GM12878 (cell line): ENCODE measurements at regions of chr11 and their contacts with region 1.

Region 1: GRCh38 chr11:95705485-95706124 is 84.0 kb downstream of the FAM76B start:
- DNase-seq: no peak
- ATAC-seq: peak; percentile 98
- H3K4me3 ChIP-seq: no peak overlapping the region
- H3K27ac ChIP-seq: no peak overlapping the region
- H3K4me1 ChIP-seq: peaks cover 6% of the 10 kb centered on the region
- H3K27me3 ChIP-seq: no peaks in the 10 kb centered on the region
- CTCF ChIP-seq: peak; percentile 92 to 97 (median 93)
- EP300 ChIP-seq: no peak
- POLR2A ChIP-seq: no peak
- RAD21 ChIP-seq: peak; percentile 99

Region 2: DNA sequence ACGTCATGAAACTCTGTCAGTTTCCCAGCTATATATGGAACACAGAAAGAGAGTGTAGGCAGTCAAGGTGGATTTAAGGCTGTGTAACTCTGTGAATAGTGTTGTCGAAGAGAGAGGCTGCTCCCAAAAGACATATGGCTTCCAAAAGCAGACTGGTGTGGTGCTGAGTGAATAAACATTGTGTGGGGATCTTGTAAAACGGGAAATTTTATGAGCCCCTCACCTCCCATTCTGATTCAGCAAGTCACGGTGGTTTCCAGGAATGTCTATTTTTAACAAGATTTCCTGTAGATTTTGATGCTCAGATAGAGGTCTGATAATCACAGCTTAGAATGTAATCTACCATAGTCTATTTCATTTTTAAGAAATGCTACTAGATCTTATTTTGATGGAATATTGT is 542.5 kb before region 1 on chr11:
- CTCF ChIA-PET with region 1: interaction called, 590 read pairs
- POLR2A ChIA-PET with region 1: no interaction called
- RAD21 ChIA-PET with region 1: interaction called, 425 read pairs
- SMC1A ChIA-PET with region 1: interaction called, 474 read pairs
- in situ Hi-C with region 1: no loop called
- intact Hi-C with region 1: no loop called
- DNase-seq: no peak
- ATAC-seq: no peak
- H3K4me3 ChIP-seq: no peak overlapping the region
- H3K27ac ChIP-seq: no peak overlapping the region
- H3K4me1 ChIP-seq: no peaks in the 10 kb centered on the region
- H3K27me3 ChIP-seq: no peaks in the 10 kb centered on the region; a peak in 1 of 4 replicates
- CTCF ChIP-seq: no peak
- EP300 ChIP-seq: no peak
- POLR2A ChIP-seq: no peak
- RAD21 ChIP-seq: no peak

Region 3: DNA sequence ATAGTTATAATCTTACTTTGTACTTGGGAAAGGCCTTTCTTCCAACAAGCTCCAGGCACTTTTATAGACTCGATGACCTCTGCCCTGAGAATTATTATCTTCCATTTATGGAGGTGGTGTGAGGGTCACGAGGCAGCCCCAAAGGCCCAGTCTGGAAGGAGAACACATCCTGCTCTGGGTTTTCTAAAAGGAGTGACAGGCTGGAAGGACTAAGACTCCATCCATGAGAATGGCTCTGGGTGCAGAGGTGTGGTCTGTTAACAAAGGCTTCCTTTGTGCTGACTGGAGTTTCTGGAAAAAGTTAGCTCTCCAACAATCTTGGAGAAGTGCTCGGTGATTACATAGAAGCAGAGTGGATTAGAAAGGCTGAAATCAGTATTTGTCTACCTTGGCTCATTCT is 399.9 kb before region 1 on chr11:
- CTCF ChIA-PET with region 1: interaction called, 12 read pairs
- POLR2A ChIA-PET with region 1: no interaction called
- RAD21 ChIA-PET with region 1: no interaction called
- SMC1A ChIA-PET with region 1: no interaction called
- in situ Hi-C with region 1: no loop called
- intact Hi-C with region 1: no loop called
- DNase-seq: no peak
- ATAC-seq: no peak
- H3K4me3 ChIP-seq: no peak overlapping the region
- H3K27ac ChIP-seq: no peak overlapping the region
- H3K4me1 ChIP-seq: no peaks in the 10 kb centered on the region
- H3K27me3 ChIP-seq: no peaks in the 10 kb centered on the region; a peak in 1 of 4 replicates
- CTCF ChIP-seq: no peak
- EP300 ChIP-seq: no peak
- POLR2A ChIP-seq: no peak
- RAD21 ChIP-seq: no peak

Region 4: DNA sequence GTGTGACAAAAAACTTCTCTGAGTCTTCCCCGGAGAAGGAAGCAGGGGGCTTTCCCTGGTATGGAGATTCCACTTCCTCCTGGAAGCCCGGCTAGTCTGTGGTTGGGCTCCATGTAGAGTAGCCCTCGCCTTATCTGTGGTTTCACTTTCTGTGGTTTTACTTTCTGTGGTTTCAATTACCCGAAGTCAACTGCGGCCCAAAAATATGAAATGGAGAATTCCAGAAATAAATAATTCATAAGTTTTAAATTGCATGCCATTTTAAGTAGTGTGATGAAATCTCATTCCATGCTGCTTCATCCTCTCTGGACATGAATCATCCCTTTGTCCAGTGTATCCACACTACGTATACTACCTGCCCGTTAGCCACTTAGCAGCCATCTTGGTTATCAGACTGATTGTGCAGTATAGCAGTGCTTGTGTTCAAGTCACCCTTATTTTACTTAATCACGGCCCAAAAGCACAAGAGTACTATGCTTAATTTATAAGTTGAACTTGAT is 199.6 kb before region 1 on chr11:
- CTCF ChIA-PET with region 1: interaction called, 20 read pairs
- POLR2A ChIA-PET with region 1: no interaction called
- RAD21 ChIA-PET with region 1: interaction called, 21 read pairs
- SMC1A ChIA-PET with region 1: interaction called, 8 read pairs
- in situ Hi-C with region 1: no loop called
- intact Hi-C with region 1: loop called (anchors 5 kb)
- DNase-seq: no peak
- ATAC-seq: no peak
- H3K4me3 ChIP-seq: no peak overlapping the region
- H3K27ac ChIP-seq: no peak overlapping the region
- H3K4me1 ChIP-seq: no peaks in the 10 kb centered on the region
- H3K27me3 ChIP-seq: no peaks in the 10 kb centered on the region; a peak in 2 of 4 replicates
- CTCF ChIP-seq: no peak
- EP300 ChIP-seq: no peak
- POLR2A ChIP-seq: no peak
- RAD21 ChIP-seq: no peak

Region 5: DNA sequence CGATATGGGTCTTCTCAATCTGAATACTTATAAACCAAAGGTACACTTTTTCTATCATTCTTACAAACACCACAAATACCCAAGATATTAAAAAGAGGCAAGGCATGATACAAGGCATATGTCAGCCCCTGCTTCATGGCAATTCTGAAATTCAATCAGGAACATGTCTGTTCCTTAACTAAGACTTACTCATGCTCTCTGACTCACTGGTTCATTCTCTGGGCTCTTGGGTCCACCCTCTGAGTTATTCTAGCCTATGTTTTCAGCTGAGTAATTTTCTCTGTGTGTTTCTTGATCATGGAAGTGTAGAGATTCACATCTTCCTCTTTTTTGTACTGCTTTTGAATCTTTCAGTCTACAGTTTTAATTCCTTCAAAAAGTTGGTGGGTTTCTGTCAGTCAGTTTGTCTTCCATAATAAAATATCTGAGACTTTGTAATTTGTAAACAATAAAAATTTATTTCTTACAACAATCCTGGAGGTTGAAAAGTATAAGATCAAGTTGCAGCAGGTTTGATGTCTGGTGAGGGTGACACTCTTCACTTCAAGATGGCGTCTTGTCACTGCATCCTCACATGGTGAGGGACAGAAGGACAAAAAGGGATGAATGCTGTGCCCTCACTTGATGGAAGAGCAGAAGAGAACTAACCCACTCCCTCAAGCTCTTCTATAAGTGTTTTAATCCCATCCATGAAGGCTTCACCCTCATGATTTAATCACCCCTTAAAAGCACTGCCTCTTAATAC is 127.7 kb before region 1 on chr11:
- CTCF ChIA-PET with region 1: interaction called, 21 read pairs
- POLR2A ChIA-PET with region 1: interaction called, 3 read pairs
- RAD21 ChIA-PET with region 1: interaction called, 25 read pairs
- SMC1A ChIA-PET with region 1: interaction called, 48 read pairs
- in situ Hi-C with region 1: no loop called
- intact Hi-C with region 1: loop called (anchors 1 kb)
- DNase-seq: no peak
- ATAC-seq: peak; percentile 85
- H3K4me3 ChIP-seq: no peak overlapping the region
- H3K27ac ChIP-seq: no peak overlapping the region
- H3K4me1 ChIP-seq: no peaks in the 10 kb centered on the region
- H3K27me3 ChIP-seq: no peaks in the 10 kb centered on the region
- CTCF ChIP-seq: peak; percentile 10 to 23 (median 11); a peak in 2 of 6 replicates
- EP300 ChIP-seq: no peak
- POLR2A ChIP-seq: no peak
- RAD21 ChIP-seq: peak; percentile 45; the same call in 1 of the 2 replicates

Region 6: GRCh38 chr11:95680169-95680929 is 25.3 kb before region 1 on chr11:
- CTCF ChIA-PET with region 1: interaction called, 19 read pairs
- POLR2A ChIA-PET with region 1: no interaction called
- RAD21 ChIA-PET with region 1: interaction called, 10 read pairs
- SMC1A ChIA-PET with region 1: interaction called, 19 read pairs
- in situ Hi-C with region 1: no loop called
- intact Hi-C with region 1: no loop called
- DNase-seq: no peak
- ATAC-seq: peak; percentile 79
- H3K4me3 ChIP-seq: no peak overlapping the region
- H3K27ac ChIP-seq: no peak overlapping the region; the same call in 1 of the 2 replicates
- H3K4me1 ChIP-seq: peaks cover 7% of the 10 kb centered on the region
- H3K27me3 ChIP-seq: no peaks in the 10 kb centered on the region
- CTCF ChIP-seq: no peak
- EP300 ChIP-seq: no peak
- POLR2A ChIP-seq: no peak
- RAD21 ChIP-seq: no peak

Region 7: DNA sequence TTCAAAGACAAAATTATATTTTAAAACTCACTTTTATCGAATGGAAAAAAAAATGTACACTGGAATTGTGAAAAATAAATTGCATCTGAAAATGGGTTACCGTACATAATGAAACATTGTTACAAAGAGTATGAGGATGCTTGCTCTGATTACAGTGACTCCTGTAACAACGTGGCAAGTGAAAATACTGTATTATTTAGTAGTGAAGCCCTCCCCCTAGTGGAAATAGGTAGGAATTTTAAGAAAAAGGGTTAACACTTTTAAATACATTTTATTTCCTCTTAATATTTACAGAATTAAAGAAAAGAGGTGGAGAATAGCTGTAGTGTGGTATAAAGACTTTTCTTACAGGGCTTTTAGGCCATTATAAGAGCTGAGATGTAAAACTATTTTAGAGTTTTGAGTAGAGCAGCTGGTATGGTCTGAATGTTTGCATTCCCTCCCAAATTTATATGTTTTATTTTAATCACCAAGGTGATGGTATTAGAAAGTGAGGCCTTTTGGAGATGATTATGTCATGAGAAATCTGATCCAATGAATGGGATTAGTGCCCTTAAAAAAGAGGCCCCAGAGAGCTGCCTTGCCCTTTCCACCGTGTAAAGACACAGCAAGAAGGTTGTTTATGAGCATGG is 58.8 kb after region 1 on chr11:
- CTCF ChIA-PET with region 1: interaction called, 172 read pairs
- POLR2A ChIA-PET with region 1: interaction called, 5 read pairs
- RAD21 ChIA-PET with region 1: interaction called, 60 read pairs
- SMC1A ChIA-PET with region 1: interaction called, 203 read pairs
- in situ Hi-C with region 1: no loop called
- intact Hi-C with region 1: loop called (anchors 2 kb)
- DNase-seq: no peak
- ATAC-seq: peak; percentile 91
- H3K4me3 ChIP-seq: no peak overlapping the region
- H3K27ac ChIP-seq: no peak overlapping the region
- H3K4me1 ChIP-seq: no peaks in the 10 kb centered on the region
- H3K27me3 ChIP-seq: no peaks in the 10 kb centered on the region
- CTCF ChIP-seq: peak; percentile 43 to 66 (median 46); a peak in 5 of 6 replicates
- EP300 ChIP-seq: no peak
- POLR2A ChIP-seq: no peak
- RAD21 ChIP-seq: peak; percentile 83